ENCODE measurements at regions of chr1 and their contacts with region 1.

Region 1: GRCh38 chr1:222171005-222171404 is 376.9 kb downstream of the HHIPL2 start:
- DNase-seq: no peak
- ATAC-seq: peak in 1 of 2 donors; percentile 27

Region 2: DNA sequence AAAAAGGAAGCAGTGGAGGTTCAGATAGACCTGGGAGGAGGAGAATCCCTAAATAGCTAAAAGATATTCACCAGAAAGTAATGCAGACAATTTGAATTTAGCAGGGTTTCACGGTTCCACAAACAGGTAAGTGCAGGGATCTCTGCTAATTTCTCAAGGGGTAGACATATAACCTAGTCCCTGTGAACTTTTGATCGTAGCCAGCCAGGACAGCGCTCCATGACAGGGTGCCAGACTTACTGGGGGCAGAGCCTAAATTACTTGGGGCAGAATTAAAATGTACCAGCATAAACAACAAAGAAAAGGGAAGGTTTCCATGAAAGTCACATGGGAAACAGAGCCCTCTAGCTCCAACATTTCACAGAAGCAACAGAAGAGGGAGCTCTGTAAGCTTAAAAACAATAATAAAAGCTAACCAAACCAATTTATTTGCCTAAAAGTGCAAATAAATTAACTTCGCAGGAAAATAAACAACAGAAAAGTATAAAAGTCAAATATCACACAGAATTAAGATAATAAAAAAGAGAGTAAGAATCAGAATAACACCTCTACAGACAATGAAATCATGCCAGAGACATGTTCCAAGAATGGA is 627.4 kb before region 1 on chr1:
- intact Hi-C with region 1: loop called (anchors 10 kb)
- DNase-seq: no peak
- ATAC-seq: peak in 1 of 2 donors; percentile 41

Region 3: GRCh38 chr1:221741711-221742554 is 429.1 kb before region 1 on chr1 and contains the start of gene DUSP10:
- intact Hi-C with region 1: loop called in 1 of 2 experiments (anchors 10 kb)
- DNase-seq: peak; percentile 98
- ATAC-seq: peak; percentile 95 to 96
- total RNA-seq, gene DUSP10: 5.3 to 6.5 TPM

Region 4: DNA sequence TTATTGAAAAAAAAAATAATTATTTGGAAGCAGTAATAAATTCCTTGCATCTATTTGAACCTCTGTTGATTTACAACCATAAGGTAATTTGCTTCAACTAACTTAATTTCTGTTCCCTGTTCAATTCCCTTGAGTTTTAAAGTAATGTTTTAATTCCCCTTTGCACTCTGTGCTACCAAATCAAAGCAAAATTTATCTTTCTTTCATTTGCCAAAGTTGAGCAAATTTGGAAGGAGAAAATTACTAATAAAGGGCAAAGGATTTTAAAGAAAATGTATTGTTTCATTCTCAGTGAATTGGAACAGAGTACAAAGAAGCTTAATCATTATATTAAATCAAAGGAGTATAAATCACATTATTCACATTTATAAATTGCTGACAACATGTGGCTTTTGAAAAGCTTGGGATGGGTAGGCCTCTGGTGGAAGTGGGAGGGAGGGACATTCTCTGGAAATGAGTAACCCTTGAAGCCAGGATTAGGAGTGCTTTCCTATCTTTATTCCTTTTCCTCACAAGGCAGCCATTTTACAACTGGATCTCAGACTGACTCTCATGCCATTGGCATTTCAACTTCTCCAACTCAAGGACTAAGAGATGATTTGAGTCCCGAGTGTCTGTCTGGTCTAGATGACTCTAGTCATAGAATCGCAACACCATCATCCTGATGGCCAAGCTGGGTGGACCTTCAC is 97.6 kb before region 1 on chr1:
- intact Hi-C with region 1: no loop called
- DNase-seq: no peak
- ATAC-seq: peak in 1 of 2 donors; percentile 70